ENCODE measurements at regions of chr4 and their contacts with region 1.

Region 1: GRCh38 chr4:119041951-119042560 is 93.6 kb upstream of the MYOZ2 start:
- DNase-seq: peak; percentile 78
- ATAC-seq: peak; percentile 92
- H3K4me3 Mint-ChIP-seq: no peak overlapping the region
- H3K27ac Mint-ChIP-seq: no peak overlapping the region
- H3K4me1 Mint-ChIP-seq: peaks cover 4% of the 10 kb centered on the region
- H3K27me3 Mint-ChIP-seq: no peaks in the 10 kb centered on the region

Region 2: DNA sequence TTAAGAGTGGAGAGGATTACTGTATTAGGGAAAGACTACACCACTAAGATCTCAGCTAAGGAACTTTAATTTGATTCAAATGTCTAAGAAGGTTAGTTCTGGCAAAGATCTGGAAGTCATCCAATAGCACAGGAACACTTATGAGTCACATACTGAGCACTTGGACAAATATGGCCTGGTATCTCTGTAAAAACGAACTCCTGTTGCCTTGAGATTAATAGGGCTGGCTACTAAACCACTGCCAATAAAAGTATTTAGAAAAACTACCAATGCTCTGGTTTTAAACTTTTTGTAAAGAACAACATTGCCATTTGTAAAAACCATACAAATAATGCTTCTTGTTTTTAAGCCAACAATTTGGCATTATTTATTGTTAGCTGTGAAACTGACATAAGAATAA is 276.7 kb before region 1 on chr4:
- CTCF ChIA-PET with region 1: no interaction called
- POLR2A ChIA-PET with region 1: no interaction called
- DNase-seq: no peak
- ATAC-seq: no peak
- H3K4me3 Mint-ChIP-seq: no peak overlapping the region
- H3K27ac Mint-ChIP-seq: no peak overlapping the region
- H3K4me1 Mint-ChIP-seq: no peaks in the 10 kb centered on the region
- H3K27me3 Mint-ChIP-seq: no peaks in the 10 kb centered on the region

Region 3: GRCh38 chr4:118981839-118982381 is 60.1 kb before region 1 on chr4:
- CTCF ChIA-PET with region 1: interaction called, 16 read pairs
- POLR2A ChIA-PET with region 1: no interaction called
- DNase-seq: peak; percentile 69
- ATAC-seq: peak; percentile 64
- H3K4me3 Mint-ChIP-seq: no peak overlapping the region
- H3K27ac Mint-ChIP-seq: no peak overlapping the region
- H3K4me1 Mint-ChIP-seq: no peaks in the 10 kb centered on the region
- H3K27me3 Mint-ChIP-seq: peaks cover 18% of the 10 kb centered on the region

Region 4: GRCh38 chr4:119017636-119018035 is 24.4 kb before region 1 on chr4:
- CTCF ChIA-PET with region 1: no interaction called
- POLR2A ChIA-PET with region 1: no interaction called
- DNase-seq: no peak
- ATAC-seq: no peak
- H3K4me3 Mint-ChIP-seq: no peak overlapping the region
- H3K27ac Mint-ChIP-seq: no peak overlapping the region
- H3K4me1 Mint-ChIP-seq: no peaks in the 10 kb centered on the region
- H3K27me3 Mint-ChIP-seq: peaks cover 13% of the 10 kb centered on the region

Region 5: GRCh38 chr4:119028296-119028695 is 13.8 kb before region 1 on chr4:
- CTCF ChIA-PET with region 1: interaction called, 17 read pairs
- POLR2A ChIA-PET with region 1: no interaction called
- DNase-seq: no peak
- ATAC-seq: no peak
- H3K4me3 Mint-ChIP-seq: no peak overlapping the region
- H3K27ac Mint-ChIP-seq: no peak overlapping the region
- H3K4me1 Mint-ChIP-seq: no peaks in the 10 kb centered on the region
- H3K27me3 Mint-ChIP-seq: peaks cover 6% of the 10 kb centered on the region

Region 6: GRCh38 chr4:119053997-119054396 is 11.9 kb after region 1 on chr4:
- CTCF ChIA-PET with region 1: interaction called, 11 read pairs
- POLR2A ChIA-PET with region 1: no interaction called
- DNase-seq: no peak
- ATAC-seq: no peak
- H3K4me3 Mint-ChIP-seq: no peak overlapping the region
- H3K27ac Mint-ChIP-seq: no peak overlapping the region
- H3K4me1 Mint-ChIP-seq: no peaks in the 10 kb centered on the region
- H3K27me3 Mint-ChIP-seq: peaks cover 3% of the 10 kb centered on the region

Region 7: GRCh38 chr4:119212234-119212963 is 170.3 kb after region 1 on chr4 and contains the start of gene USP53:
- CTCF ChIA-PET with region 1: interaction called, 53 read pairs
- POLR2A ChIA-PET with region 1: no interaction called
- DNase-seq: peak; percentile 98
- ATAC-seq: peak; percentile 96
- H3K4me3 Mint-ChIP-seq: peak within 1 kb of the TSS; percentile 97
- H3K27ac Mint-ChIP-seq: peak within 1 kb of the TSS; percentile 88
- H3K4me1 Mint-ChIP-seq: peaks cover 36% of the 10 kb centered on the region
- H3K27me3 Mint-ChIP-seq: no peaks in the 10 kb centered on the region
- total RNA-seq, gene USP53: 10.0 to 10.1 TPM

Region 8: DNA sequence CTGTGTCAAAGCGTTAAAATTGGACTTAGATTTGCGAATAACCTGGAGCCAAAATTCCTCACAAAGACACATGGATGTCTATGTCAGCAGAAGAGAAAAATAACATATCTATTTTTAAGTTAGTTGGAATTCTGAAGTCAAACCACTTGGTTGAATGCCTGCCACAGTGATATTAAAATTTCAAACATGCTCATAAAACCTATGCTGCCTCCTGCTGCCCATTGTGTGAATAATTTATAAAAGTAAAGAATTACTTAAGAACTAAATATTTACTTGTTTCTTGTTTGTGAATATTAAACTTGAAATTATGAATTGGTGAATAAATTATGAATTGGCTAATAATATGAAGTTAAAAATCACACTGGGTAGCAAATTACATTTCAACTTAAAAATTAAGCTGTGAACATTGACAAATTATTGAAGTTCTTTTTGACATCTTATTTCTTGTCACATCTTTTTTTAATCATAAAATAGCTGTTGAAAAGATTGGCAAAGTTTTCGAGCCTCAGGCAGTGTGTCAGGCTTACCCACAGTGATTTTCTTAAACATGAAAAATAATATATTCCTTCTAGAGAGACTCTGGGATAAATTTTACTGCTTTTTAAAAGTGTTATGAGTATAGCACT is 244.4 kb after region 1 on chr4:
- CTCF ChIA-PET with region 1: interaction called, 36 read pairs
- POLR2A ChIA-PET with region 1: no interaction called
- DNase-seq: peak; percentile 49
- ATAC-seq: no peak
- H3K4me3 Mint-ChIP-seq: no peak overlapping the region
- H3K27ac Mint-ChIP-seq: no peak overlapping the region
- H3K4me1 Mint-ChIP-seq: peaks cover 18% of the 10 kb centered on the region
- H3K27me3 Mint-ChIP-seq: no peaks in the 10 kb centered on the region

Region 9: DNA sequence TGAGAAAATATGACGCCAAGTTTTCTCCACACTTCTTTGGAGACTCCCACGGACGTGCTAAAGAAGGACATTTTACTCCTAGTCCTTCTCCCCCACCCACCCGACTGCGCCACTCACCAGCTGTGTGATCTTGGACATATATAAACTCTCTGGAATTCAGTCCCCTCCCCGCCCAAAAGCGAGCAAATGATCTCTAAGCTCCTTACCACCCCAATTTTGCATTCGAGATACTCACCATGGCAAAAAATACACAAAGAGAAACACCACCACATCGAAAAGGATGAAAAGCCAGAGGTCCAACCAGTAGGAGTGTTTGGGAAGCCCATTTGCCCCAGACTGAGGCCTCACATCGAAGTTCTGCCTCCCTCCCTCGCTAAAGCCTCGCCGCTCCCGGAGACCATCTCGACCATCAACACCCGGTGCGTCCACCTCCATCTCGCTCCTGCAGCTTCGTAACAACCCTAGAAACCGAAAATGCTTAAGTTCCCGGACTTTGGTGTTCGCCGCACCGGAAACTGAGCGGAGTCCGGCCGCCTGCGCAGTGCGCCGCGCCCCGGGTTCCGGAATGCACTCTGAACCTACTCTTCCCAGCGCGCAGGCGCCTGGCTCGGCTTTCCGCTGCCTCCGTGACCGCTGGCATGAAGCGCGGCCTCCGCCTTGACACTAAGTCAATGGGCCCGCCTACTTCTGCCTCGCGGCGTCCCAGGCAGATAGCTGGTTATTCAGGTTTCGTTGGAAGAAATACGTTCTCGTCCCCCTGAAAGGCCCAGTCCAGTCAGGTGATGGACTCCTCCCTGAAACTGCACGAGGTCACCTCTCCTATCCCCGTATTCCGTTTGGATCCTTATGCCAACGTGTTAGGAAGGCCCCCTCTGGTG is 258.3 kb after region 1 on chr4:
- CTCF ChIA-PET with region 1: interaction called, 29 read pairs
- POLR2A ChIA-PET with region 1: interaction called, 4 read pairs
- DNase-seq: peak; percentile 95
- ATAC-seq: peak; percentile 98
- H3K4me3 Mint-ChIP-seq: peak overlapping the region; percentile 99
- H3K27ac Mint-ChIP-seq: peak overlapping the region; percentile 99
- H3K4me1 Mint-ChIP-seq: peaks cover 33% of the 10 kb centered on the region
- H3K27me3 Mint-ChIP-seq: peaks cover 2% of the 10 kb centered on the region